Aorta (tissue), 5 donors: ENCODE measurements at regions of chr2 and their contacts with region 1.

Region 1: DNA sequence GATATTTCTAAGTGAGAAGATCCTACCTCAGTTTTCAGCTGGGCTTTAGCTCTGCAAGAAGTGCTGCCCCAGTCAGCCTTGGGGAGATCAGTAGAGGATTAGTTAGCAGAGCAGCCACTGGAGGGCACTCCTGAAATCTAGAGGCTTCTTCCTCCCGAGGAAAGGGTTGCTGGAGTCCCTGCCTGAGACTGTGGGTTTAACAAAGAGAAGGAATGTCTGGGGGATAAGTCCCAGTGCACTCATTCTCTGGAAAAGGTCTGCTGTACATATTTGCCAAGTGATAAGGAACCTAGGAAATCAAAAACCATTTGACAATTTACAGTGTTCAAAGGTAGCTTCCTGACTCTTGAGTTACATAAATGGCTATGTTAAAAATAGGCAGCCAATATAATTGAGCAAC is 207.2 kb downstream of the SLC8A1 start:
- DNase-seq: peak; percentile 71 to 72
- ATAC-seq: peak; percentile 71
- H3K4me3 ChIP-seq: no peak overlapping the region
- H3K27ac ChIP-seq: peak overlapping the region in 1 of 2 donors; percentile 5
- H3K4me1 ChIP-seq: peaks cover 0 to 8% of the 10 kb centered on the region in 2 donors
- H3K27me3 ChIP-seq: no peaks in the 10 kb centered on the region

Region 2: GRCh38 chr2:40281021-40281940 is 36.6 kb after region 1 on chr2:
- intact Hi-C with region 1: loop called in 1 of 2 experiments (anchors 5 kb)
- DNase-seq: no peak
- ATAC-seq: peak; percentile 72
- H3K4me3 ChIP-seq: no peak overlapping the region
- H3K27ac ChIP-seq: peak overlapping the region; percentile 76 to 78
- H3K4me1 ChIP-seq: peaks cover 4 to 5% of the 10 kb centered on the region in 2 donors
- H3K27me3 ChIP-seq: no peaks in the 10 kb centered on the region

Region 3: GRCh38 chr2:40448468-40449079 is 203.9 kb after region 1 on chr2:
- intact Hi-C with region 1: loop called (anchors 5 kb)
- DNase-seq: no peak
- ATAC-seq: no peak
- H3K4me3 ChIP-seq: no peak overlapping the region
- H3K27ac ChIP-seq: no peak overlapping the region
- H3K4me1 ChIP-seq: no peaks in the 10 kb centered on the region
- H3K27me3 ChIP-seq: no peaks in the 10 kb centered on the region

Region 4: DNA sequence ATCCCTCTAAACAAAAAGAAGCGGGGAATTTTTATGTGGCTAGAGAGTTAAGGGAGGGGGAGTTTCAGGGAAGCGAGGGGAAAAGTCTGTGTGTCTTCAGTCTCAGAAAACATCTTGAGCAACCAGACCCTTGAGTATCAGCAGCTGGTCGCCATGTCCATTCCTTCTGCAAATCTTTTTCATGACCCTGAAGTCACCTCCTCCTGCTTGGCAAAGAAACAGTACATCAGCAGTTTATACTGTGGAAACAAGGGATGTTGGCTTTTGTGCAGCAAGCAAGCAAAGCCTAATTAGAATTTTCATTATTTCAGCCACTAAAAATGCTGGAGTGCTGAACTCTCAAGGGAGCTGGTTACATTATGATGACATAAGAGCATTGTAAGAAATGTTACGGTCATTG is 394.6 kb after region 1 on chr2:
- intact Hi-C with region 1: no loop called
- DNase-seq: no peak
- ATAC-seq: no peak
- H3K4me3 ChIP-seq: no peak overlapping the region
- H3K27ac ChIP-seq: no peak overlapping the region
- H3K4me1 ChIP-seq: no peaks in the 10 kb centered on the region
- H3K27me3 ChIP-seq: no peaks in the 10 kb centered on the region